Mammary epithelial cell (primary cell): ENCODE measurements at regions of chr1 and their contacts with region 1.

Region 1: GRCh38 chr1:16971341-16972188 is 8.9 kb downstream of the MFAP2 start:
- DNase-seq: no peak
- H3K4me3 ChIP-seq: no peak overlapping the region
- H3K27ac ChIP-seq: no peak overlapping the region
- H3K4me1 ChIP-seq: peaks cover 7% of the 10 kb centered on the region
- H3K27me3 ChIP-seq: no peaks in the 10 kb centered on the region
- CTCF ChIP-seq: no peak

Region 2: GRCh38 chr1:16904560-16905111 is 66.9 kb before region 1 on chr1:
- CTCF ChIA-PET with region 1: no interaction called
- dilution Hi-C with region 1: loop called (anchors 5 kb)
- in situ Hi-C with region 1: no loop called
- intact Hi-C with region 1: no loop called
- DNase-seq: peak; percentile 97
- H3K4me3 ChIP-seq: peak overlapping the region; percentile 52 to 69 (median 54)
- H3K27ac ChIP-seq: peak overlapping the region; percentile 100
- H3K4me1 ChIP-seq: peaks cover 19% of the 10 kb centered on the region
- H3K27me3 ChIP-seq: no peaks in the 10 kb centered on the region
- CTCF ChIP-seq: no peak

Region 3: DNA sequence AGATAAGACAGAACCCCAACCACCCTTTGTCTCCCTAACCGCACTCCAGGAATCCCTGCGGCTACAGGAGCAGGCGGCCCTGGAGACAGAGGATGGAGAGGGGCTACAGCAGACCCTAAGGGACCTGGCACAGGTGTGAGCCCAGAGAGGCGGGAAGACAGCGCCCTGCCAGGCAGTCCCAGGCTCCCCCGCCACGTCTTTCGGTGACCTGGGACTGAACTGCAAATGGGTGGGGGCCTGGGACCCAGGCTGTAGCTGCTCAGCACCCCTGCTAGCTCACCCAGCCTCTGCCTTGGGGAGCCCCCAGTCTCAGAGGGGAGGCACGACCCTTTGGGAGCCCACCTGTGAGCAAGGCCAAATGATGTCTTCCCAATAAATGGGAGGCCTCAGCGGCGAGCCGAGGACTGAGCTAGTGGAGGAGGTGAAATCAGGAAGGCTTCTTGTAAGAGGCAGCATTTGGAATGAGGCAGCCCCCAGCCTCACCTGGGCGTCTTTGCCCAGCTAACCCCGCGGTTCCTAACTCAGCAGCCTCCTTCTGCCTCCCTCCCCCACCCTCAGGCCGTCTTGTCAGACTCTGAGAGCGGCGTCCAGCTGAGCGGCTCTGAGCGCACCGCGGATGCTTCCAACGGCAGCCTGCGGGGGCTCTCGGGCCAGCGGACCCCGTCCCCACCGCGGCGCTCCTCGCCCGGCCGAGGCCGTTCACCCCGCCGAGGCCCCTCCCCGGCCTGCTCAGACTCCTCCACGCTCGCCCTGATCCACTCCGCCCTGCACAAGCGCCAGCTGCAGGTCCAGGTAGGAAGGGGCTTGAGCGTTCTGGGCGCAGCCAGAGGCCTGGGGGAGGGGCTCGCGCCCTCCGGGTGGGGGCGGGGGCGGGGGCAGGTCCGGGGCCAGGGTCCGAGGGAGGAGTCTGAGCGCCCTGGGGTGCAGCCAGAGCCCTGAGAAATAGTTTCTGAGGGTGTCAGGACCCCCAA is 32.9 kb before region 1 on chr1:
- CTCF ChIA-PET with region 1: no interaction called
- dilution Hi-C with region 1: loop called (anchors 5 kb)
- in situ Hi-C with region 1: no loop called
- intact Hi-C with region 1: no loop called
- DNase-seq: no peak
- H3K4me3 ChIP-seq: no peak overlapping the region
- H3K27ac ChIP-seq: no peak overlapping the region
- H3K4me1 ChIP-seq: no peaks in the 10 kb centered on the region
- H3K27me3 ChIP-seq: no peaks in the 10 kb centered on the region
- CTCF ChIP-seq: no peak